PC-3 (cell line): ENCODE measurements at regions of chr10 and their contacts with region 1.

Region 1: GRCh38 chr10:57362811-57363210 is 904.9 kb downstream of the IPMK start:
- DNase-seq: no peak
- ATAC-seq: no peak
- H3K4me3 ChIP-seq: no peak overlapping the region
- H3K27ac ChIP-seq: no peak overlapping the region
- H3K4me1 ChIP-seq: no peaks in the 10 kb centered on the region
- H3K27me3 ChIP-seq: no peaks in the 10 kb centered on the region
- CTCF ChIP-seq: no peak

Region 2: DNA sequence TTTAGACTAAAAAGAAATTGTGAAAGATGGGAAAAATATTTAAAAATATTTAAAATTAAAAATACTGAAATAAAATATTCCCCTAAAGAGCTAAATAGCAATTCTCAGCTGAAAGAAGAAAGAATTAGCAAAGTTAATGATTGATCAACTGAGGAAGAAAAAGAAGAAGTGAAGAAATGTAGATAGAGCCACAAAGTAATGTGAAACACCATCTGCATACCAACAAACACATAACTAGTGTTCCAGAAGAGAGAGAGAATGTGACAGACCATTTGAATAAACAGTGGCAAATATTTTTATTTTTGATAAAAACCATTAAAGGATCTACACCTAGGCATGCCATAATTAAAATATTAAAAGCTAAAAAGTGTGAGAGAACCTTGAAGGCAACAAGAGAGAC is 217.3 kb before region 1 on chr10:
- CTCF ChIA-PET with region 1: no interaction called
- POLR2A ChIA-PET with region 1: no interaction called
- intact Hi-C with region 1: loop called (anchors 5 kb)
- DNase-seq: no peak
- ATAC-seq: no peak
- H3K4me3 ChIP-seq: no peak overlapping the region
- H3K27ac ChIP-seq: no peak overlapping the region
- H3K4me1 ChIP-seq: no peaks in the 10 kb centered on the region
- H3K27me3 ChIP-seq: no peaks in the 10 kb centered on the region
- CTCF ChIP-seq: no peak

Region 3: GRCh38 chr10:57395923-57396322 is 33.1 kb after region 1 on chr10:
- CTCF ChIA-PET with region 1: no interaction called
- POLR2A ChIA-PET with region 1: no interaction called
- intact Hi-C with region 1: no loop called
- DNase-seq: peak; percentile 8
- ATAC-seq: no peak; the same call in 1 of the 2 replicates
- H3K4me3 ChIP-seq: no peak overlapping the region
- H3K27ac ChIP-seq: no peak overlapping the region
- H3K4me1 ChIP-seq: no peaks in the 10 kb centered on the region
- H3K27me3 ChIP-seq: no peaks in the 10 kb centered on the region
- CTCF ChIP-seq: no peak